Heart right ventricle (tissue), 16 donors: ENCODE measurements at regions of chr3 and their contacts with region 1.

Region 1: GRCh38 chr3:169966428-169966950 is at the start of gene SEC62:
- DNase-seq: peak; percentile 95 to 96
- ATAC-seq: peak; percentile 98 to 99 (median 99)
- H3K4me3 ChIP-seq: peak within 1 kb of the TSS; percentile 76 to 93 (median 84)
- H3K27ac ChIP-seq: peak within 1 kb of the TSS; percentile 87 to 98 (median 96)
- H3K4me1 ChIP-seq: peaks cover 0 to 49% (median 46%) of the 10 kb centered on the region in 9 donors
- H3K27me3 ChIP-seq: no peaks in the 10 kb centered on the region
- CTCF ChIP-seq: peak in 8 of 9 donors; percentile 21 to 74 (median 48)
- total RNA-seq, gene SEC62: 73.2 to 108 (median 77.7) TPM

Region 2: DNA sequence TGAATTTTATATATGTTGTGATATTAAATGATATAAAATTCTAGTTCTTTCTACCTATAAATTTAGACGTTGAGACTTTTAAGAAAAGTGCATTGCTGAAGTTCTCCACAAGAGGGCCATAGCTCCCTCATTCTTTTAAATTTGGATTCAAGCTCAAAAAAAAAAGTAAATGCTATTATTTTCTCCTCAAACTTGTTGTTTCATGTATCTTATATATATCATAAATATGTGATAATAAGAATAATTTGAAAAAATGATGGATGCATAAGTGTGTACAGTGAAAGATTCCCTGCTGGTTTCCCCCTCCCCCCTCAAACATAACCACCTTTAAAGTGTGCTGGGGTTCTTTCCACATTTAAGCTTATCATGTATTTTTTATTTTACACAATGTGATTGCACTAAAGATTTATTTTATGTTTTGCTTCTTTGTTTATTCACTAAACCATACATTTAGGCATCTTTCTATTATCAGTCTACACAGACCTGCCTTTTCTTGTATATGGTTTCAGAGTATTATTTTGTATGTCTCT is 1101.4 kb before region 1 on chr3:
- intact Hi-C with region 1: loop called in 1 of 10 experiments (anchors 10 kb)
- DNase-seq: no peak
- ATAC-seq: no peak
- H3K4me3 ChIP-seq: peak overlapping the region in 5 of 10 donors; percentile 13 to 37 (median 23)
- H3K27ac ChIP-seq: peak overlapping the region in 1 of 10 donors; percentile 36
- H3K4me1 ChIP-seq: peaks cover 0 to 4% (median 0%) of the 10 kb centered on the region in 9 donors
- H3K27me3 ChIP-seq: no peaks in the 10 kb centered on the region
- CTCF ChIP-seq: peak; percentile 62 to 84 (median 73)

Region 3: GRCh38 chr3:169772897-169773828 is 193.3 kb before region 1 on chr3 and contains the start of gene MYNN:
- intact Hi-C with region 1: loop called in 2 of 10 experiments (anchors 5 to 10 kb)
- DNase-seq: peak; percentile 92 to 94
- ATAC-seq: peak; percentile 94 to 97 (median 96)
- H3K4me3 ChIP-seq: peak within 1 kb of the TSS; percentile 67 to 94 (median 87)
- H3K27ac ChIP-seq: peak within 1 kb of the TSS; percentile 95 to 100 (median 98)
- H3K4me1 ChIP-seq: peaks cover 5 to 37% (median 28%) of the 10 kb centered on the region in 9 donors
- H3K27me3 ChIP-seq: no peaks in the 10 kb centered on the region
- CTCF ChIP-seq: peak in 3 of 9 donors; percentile 8 to 32 (median 20)
- total RNA-seq, gene MYNN: 10.1 to 13.6 (median 12.0) TPM

Region 4: GRCh38 chr3:169863458-169863899 is 103.0 kb before region 1 on chr3:
- intact Hi-C with region 1: loop called in 9 of 10 experiments (anchors 1 to 10 kb)
- DNase-seq: peak in 1 of 2 donors; percentile 67
- ATAC-seq: peak in 7 of 8 donors; percentile 38 to 76 (median 70)
- H3K4me3 ChIP-seq: no peak overlapping the region
- H3K27ac ChIP-seq: no peak overlapping the region
- H3K4me1 ChIP-seq: peaks cover 0 to 9% (median 0%) of the 10 kb centered on the region in 9 donors
- H3K27me3 ChIP-seq: peaks cover 0 to 4% (median 0%) of the 10 kb centered on the region in 7 donors
- CTCF ChIP-seq: peak; percentile 87 to 96 (median 91)

Region 5: DNA sequence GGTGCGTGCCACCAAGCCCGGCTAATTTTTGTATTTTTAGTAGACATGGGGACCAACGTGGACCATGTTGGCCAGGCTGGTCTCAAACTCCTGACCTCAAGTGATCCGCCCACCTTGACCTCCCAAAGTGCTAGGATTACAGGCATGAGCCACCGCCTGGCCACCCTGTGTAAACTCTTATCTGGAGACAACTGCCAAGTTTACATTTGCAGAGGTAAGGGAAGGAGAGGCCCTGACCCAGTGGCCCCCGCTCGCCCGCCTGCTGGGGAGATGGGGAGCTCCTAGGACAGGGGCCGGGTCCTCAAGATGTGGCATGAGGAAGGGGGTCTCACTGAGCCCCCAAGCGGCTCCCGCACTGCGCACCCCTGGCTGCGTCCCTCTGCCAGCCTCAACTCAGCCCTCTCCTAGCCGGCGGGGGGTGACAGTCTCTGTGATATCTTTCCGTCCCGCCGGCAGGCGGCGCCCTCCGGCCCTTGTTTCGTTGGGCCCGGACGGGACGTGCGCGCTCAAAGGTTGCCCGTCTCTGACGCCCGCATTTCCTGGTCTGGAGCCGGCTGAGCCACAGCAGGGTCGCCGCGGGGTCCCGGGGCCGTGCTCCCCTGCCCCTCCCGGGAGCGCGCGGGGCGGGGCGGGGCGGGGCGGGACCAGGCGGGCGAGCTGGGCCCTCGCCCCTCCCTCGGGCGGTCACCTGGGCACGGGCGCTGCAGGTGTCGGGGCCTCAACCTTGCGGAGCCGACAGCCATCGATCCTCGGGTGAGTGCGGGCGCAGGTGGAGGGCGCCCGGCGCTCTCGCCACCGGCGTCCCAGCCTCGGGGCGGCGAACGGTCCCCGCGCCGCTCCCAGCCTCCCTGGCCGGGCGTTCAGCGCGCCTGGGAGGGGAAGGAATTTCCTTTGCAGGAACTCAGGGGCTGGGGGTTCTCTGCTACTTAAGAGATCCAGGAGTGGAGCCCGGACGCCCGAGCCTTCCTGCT is 71.3 kb after region 1 on chr3 and contains the start of gene GPR160:
- intact Hi-C with region 1: loop called in 1 of 10 experiments (anchors 5 kb)
- DNase-seq: peak; percentile 57 to 76
- ATAC-seq: peak; percentile 70 to 92 (median 88)
- H3K4me3 ChIP-seq: peak within 1 kb of the TSS; percentile 49 to 79 (median 66)
- H3K27ac ChIP-seq: peak within 1 kb of the TSS in 3 of 10 donors; percentile 39 to 87 (median 64)
- H3K4me1 ChIP-seq: peaks cover 0 to 23% (median 14%) of the 10 kb centered on the region in 9 donors
- H3K27me3 ChIP-seq: peaks cover 0 to 44% (median 29%) of the 10 kb centered on the region in 7 donors
- CTCF ChIP-seq: peak; percentile 31 to 77 (median 69)
- total RNA-seq, gene GPR160: 0.22 to 1.9 (median 0.79) TPM